A673 (cell line): ENCODE measurements at regions of chr7 and their contacts with region 1.

Region 1: GRCh38 chr7:130941322-130942210 is 207.6 kb upstream of the KLF14 start:
- DNase-seq: peak; percentile 76
- H3K4me3 ChIP-seq: peak overlapping the region; percentile 55
- H3K27ac ChIP-seq: peak overlapping the region; percentile 94
- H3K4me1 ChIP-seq: peaks cover 86% of the 10 kb centered on the region
- H3K27me3 ChIP-seq: no peaks in the 10 kb centered on the region
- CTCF ChIP-seq: no peak

Region 2: GRCh38 chr7:130758429-130759056 is 183.0 kb before region 1 on chr7:
- CTCF ChIA-PET with region 1: no interaction called
- POLR2A ChIA-PET with region 1: no interaction called
- intact Hi-C with region 1: no loop called
- DNase-seq: peak; percentile 71
- H3K4me3 ChIP-seq: no peak overlapping the region
- H3K27ac ChIP-seq: no peak overlapping the region
- H3K4me1 ChIP-seq: no peaks in the 10 kb centered on the region
- H3K27me3 ChIP-seq: no peaks in the 10 kb centered on the region
- CTCF ChIP-seq: peak; percentile 84

Region 3: DNA sequence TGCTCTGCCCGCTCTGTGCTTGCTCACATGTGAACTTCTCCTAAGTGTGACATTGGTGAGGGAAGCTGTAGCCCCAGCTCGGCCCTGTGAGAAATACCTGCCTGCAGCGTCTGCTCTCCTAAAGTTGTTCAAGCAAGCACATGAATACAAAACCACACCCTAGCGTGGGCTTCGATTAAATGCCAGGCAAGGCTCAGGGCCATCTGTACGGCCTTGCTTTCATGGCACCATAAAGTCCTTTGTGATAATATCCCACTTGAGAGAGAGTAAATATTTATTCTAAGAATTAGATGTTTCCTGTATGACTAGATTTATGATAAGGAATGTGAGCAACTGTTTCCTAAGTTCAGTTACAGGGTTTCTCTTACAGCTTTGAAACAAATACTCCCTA is 55.3 kb after region 1 on chr7:
- CTCF ChIA-PET with region 1: no interaction called
- POLR2A ChIA-PET with region 1: no interaction called
- intact Hi-C with region 1: no loop called
- DNase-seq: peak; percentile 64
- H3K4me3 ChIP-seq: no peak overlapping the region
- H3K27ac ChIP-seq: no peak overlapping the region
- H3K4me1 ChIP-seq: peaks cover 56% of the 10 kb centered on the region
- H3K27me3 ChIP-seq: no peaks in the 10 kb centered on the region
- CTCF ChIP-seq: no peak

Region 4: DNA sequence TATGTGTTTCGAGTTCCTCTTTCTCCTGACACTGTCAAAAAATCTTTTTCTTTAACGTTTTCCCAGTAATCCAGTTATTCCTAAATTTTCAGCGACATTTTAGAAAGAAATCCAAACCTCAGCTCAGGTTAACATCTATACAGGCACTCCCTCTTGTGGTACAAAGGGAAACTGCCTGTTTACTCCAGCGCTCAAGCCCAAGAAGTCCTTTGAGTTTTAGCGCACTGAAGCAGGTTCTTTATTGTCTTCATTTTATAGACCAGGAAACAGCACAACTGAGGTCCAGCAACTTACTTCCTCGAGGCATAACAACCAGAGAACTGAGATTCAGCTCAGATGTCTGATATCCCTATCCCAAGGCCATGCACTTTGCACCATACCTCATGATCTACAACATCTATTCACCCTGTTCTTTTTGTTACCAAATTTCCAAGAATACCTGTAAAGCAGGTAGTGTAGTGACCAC is 98.9 kb after region 1 on chr7:
- CTCF ChIA-PET with region 1: no interaction called
- POLR2A ChIA-PET with region 1: no interaction called
- intact Hi-C with region 1: loop called (anchors 5 kb)
- DNase-seq: peak; percentile 86
- H3K4me3 ChIP-seq: no peak overlapping the region
- H3K27ac ChIP-seq: peak overlapping the region; percentile 89
- H3K4me1 ChIP-seq: peaks cover 56% of the 10 kb centered on the region
- H3K27me3 ChIP-seq: no peaks in the 10 kb centered on the region
- CTCF ChIP-seq: peak; percentile 93

Region 5: GRCh38 chr7:131139462-131139861 is 197.9 kb after region 1 on chr7:
- CTCF ChIA-PET with region 1: no interaction called
- POLR2A ChIA-PET with region 1: no interaction called
- intact Hi-C with region 1: no loop called
- DNase-seq: no peak
- H3K4me3 ChIP-seq: no peak overlapping the region
- H3K27ac ChIP-seq: no peak overlapping the region
- H3K4me1 ChIP-seq: peaks cover 5% of the 10 kb centered on the region
- H3K27me3 ChIP-seq: no peaks in the 10 kb centered on the region
- CTCF ChIP-seq: no peak